ENCODE measurements at regions of chr1 and their contacts with region 1.

Region 1: GRCh38 chr1:207836591-207837347 is 74.2 kb downstream of the CD34 start:
- DNase-seq: no peak
- ATAC-seq: no peak
- H3K4me3 ChIP-seq: no peak overlapping the region
- H3K4me3 Mint-ChIP-seq: peak overlapping the region; percentile 8
- H3K27ac ChIP-seq: no peak overlapping the region
- H3K27ac Mint-ChIP-seq: peak overlapping the region; percentile 95
- H3K4me1 ChIP-seq: peaks cover 85% of the 10 kb centered on the region
- H3K4me1 Mint-ChIP-seq: peaks cover 95% of the 10 kb centered on the region
- H3K27me3 ChIP-seq: no peaks in the 10 kb centered on the region
- H3K27me3 Mint-ChIP-seq: no peaks in the 10 kb centered on the region
- CTCF ChIP-seq: no peak

Region 2: GRCh38 chr1:207885129-207886032 is 48.6 kb after region 1 on chr1:
- CTCF ChIA-PET with region 1: interaction called, 12 read pairs
- POLR2A ChIA-PET with region 1: no interaction called
- intact Hi-C with region 1: no loop called
- DNase-seq: peak; percentile 54 to 89 (median 62)
- ATAC-seq: peak; percentile 78
- H3K4me3 ChIP-seq: no peak overlapping the region
- H3K4me3 Mint-ChIP-seq: peak overlapping the region; percentile 76
- H3K27ac ChIP-seq: no peak overlapping the region
- H3K27ac Mint-ChIP-seq: peak overlapping the region; percentile 92
- H3K4me1 ChIP-seq: peaks cover 32% of the 10 kb centered on the region
- H3K4me1 Mint-ChIP-seq: peaks cover 38% of the 10 kb centered on the region
- H3K27me3 ChIP-seq: no peaks in the 10 kb centered on the region
- H3K27me3 Mint-ChIP-seq: peaks cover 5% of the 10 kb centered on the region
- CTCF ChIP-seq: peak; percentile 98

Region 3: GRCh38 chr1:207973898-207974568 is 137.3 kb after region 1 on chr1:
- CTCF ChIA-PET with region 1: no interaction called
- POLR2A ChIA-PET with region 1: no interaction called
- intact Hi-C with region 1: no loop called
- DNase-seq: peak in 2 of 14 experiments; percentile 27 to 46
- ATAC-seq: no peak
- H3K4me3 ChIP-seq: no peak overlapping the region
- H3K4me3 Mint-ChIP-seq: no peak overlapping the region
- H3K27ac ChIP-seq: no peak overlapping the region
- H3K27ac Mint-ChIP-seq: no peak overlapping the region
- H3K4me1 ChIP-seq: no peaks in the 10 kb centered on the region
- H3K4me1 Mint-ChIP-seq: no peaks in the 10 kb centered on the region
- H3K27me3 ChIP-seq: no peaks in the 10 kb centered on the region
- H3K27me3 Mint-ChIP-seq: peaks cover 30% of the 10 kb centered on the region
- CTCF ChIP-seq: no peak

Measured in CD4-positive, alpha-beta T cell (primary cell).